Ascending aorta (tissue), 2 donors: ENCODE measurements at regions of chr1 and their contacts with region 1.

Region 1: GRCh38 chr1:67430352-67431155 is at the start of gene SERBP1:
- DNase-seq: peak; percentile 88 to 98
- H3K4me3 ChIP-seq: peak within 1 kb of the TSS; percentile 83 to 88
- H3K27ac ChIP-seq: peak within 1 kb of the TSS; percentile 94 to 98
- H3K4me1 ChIP-seq: peaks cover 0 to 31% of the 10 kb centered on the region in 2 donors
- H3K27me3 ChIP-seq: no peaks in the 10 kb centered on the region
- CTCF ChIP-seq: no peak
- total RNA-seq, gene SERBP1: 125 TPM

Region 2: GRCh38 chr1:66924756-66925557 is 505.6 kb before region 1 on chr1 and contains the starts of genes DNAI4 and MIER1:
- intact Hi-C with region 1: loop called (anchors 10 kb)
- DNase-seq: peak; percentile 95 to 99
- H3K4me3 ChIP-seq: peak within 1 kb of the TSS; percentile 71 to 74
- H3K27ac ChIP-seq: peak within 1 kb of the TSS; percentile 85 to 95
- H3K4me1 ChIP-seq: peaks cover 10% of the 10 kb centered on the region in 2 donors
- H3K27me3 ChIP-seq: no peaks in the 10 kb centered on the region
- CTCF ChIP-seq: peak in 1 of 3 experiments; percentile 17
- total RNA-seq, gene DNAI4: not detected
- total RNA-seq, gene MIER1: 18.4 TPM

Region 3: DNA sequence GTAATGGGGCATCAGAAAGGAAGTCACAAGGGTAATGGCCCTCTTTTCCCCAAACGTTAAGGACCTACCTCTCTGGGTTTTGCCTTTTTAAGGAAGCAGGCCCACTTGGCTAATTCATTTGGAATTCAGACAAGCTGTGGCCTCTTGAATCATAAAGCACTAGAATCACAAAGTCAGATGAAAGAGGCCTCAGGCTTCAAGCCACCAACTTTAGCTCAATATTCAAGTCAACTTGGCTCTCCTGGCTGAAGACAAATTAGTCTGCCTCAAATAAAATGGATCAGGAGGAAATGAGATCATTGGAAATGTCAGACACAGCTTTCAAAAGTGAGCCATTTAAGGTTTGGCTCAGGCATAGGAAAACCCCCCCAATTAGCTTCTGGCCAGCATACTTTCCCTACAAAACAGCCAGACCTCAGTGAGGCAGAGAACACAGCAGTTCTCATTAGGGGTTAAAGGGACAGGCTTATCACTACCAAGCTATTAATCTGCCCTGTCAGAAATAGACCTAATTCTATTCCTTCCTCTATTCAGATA is 410.9 kb before region 1 on chr1:
- intact Hi-C with region 1: loop called (anchors 10 kb)
- DNase-seq: peak in 1 of 2 donors; percentile 77
- H3K4me3 ChIP-seq: no peak overlapping the region
- H3K27ac ChIP-seq: peak overlapping the region; percentile 87 to 90
- H3K4me1 ChIP-seq: peaks cover 0 to 33% of the 10 kb centered on the region in 2 donors
- H3K27me3 ChIP-seq: no peaks in the 10 kb centered on the region
- CTCF ChIP-seq: no peak

Region 4: DNA sequence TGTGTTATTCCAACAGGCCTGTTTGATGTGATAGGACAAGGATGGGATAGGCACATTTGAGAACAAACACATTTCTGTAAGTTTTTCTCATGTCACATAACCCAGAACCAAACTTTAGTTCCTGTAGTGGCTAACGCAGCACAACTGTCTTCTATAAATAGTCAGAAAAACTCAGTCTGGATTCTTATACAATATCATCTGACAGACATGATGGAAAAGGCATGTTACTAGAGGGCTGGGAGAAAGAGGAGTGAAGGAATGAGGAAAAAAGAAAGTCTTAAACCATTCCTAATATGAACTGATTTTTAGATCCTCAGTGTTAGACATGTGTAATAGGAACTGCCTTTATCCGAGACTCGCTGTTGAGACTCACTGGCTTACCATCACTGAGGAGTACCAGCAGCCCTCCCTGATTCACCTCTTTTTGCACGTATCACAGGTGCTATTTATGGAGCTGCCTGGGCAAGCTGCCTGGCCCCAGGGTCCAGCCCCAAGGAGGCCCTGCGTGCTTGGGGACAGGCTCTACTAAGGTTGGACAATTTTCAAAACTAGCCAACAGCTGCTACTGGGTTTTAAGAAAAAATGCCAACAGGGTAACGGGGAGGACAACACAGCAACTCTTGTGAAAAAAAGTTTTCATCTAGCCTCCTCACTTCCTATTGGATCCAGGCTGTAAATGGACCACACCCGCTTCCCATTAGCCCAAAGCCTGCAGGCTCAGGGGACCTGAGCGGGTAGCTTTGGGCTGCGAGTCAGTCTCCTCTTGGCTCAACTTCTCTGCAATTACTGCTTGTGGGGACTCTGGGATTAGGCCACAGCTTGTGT is 30.3 kb after region 1 on chr1:
- intact Hi-C with region 1: loop called (anchors 2 kb)
- DNase-seq: peak in 1 of 2 donors; percentile 68
- H3K4me3 ChIP-seq: peak overlapping the region in 1 of 2 donors; percentile 21
- H3K27ac ChIP-seq: peak overlapping the region; percentile 50 to 63
- H3K4me1 ChIP-seq: peaks cover 3 to 9% of the 10 kb centered on the region in 2 donors
- H3K27me3 ChIP-seq: no peaks in the 10 kb centered on the region
- CTCF ChIP-seq: no peak

Region 5: DNA sequence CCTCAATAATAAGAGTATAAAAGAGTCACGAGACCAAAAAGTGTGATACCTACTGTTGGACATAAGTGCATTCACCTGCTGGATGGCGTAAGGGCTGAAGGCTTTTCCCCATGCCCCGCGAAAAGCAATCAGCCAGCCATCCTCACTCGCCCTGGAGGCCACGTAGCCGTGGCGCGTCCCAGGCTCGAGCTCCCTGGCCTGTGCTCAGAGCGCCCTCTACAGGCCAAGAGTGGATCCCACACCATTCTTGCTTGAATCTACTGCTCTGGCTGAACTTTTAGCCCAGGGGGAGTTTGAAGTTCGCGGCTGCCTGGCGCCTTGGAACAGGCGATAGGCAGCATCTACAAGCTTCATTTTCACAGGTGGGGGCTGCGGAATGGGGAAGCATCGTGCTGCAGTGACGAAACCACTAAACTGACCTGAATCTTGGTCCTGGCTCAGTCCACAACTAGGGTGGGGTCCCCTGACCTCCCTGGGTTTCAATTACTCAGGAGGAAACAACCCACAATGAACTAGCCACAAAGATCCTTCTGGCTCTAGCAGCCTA is 69.9 kb after region 1 on chr1:
- intact Hi-C with region 1: loop called (anchors 2 kb)
- DNase-seq: peak; percentile 31 to 91
- H3K4me3 ChIP-seq: no peak overlapping the region
- H3K27ac ChIP-seq: no peak overlapping the region
- H3K4me1 ChIP-seq: no peaks in the 10 kb centered on the region
- H3K27me3 ChIP-seq: no peaks in the 10 kb centered on the region
- CTCF ChIP-seq: peak; percentile 93 to 98 (median 96)

Region 6: DNA sequence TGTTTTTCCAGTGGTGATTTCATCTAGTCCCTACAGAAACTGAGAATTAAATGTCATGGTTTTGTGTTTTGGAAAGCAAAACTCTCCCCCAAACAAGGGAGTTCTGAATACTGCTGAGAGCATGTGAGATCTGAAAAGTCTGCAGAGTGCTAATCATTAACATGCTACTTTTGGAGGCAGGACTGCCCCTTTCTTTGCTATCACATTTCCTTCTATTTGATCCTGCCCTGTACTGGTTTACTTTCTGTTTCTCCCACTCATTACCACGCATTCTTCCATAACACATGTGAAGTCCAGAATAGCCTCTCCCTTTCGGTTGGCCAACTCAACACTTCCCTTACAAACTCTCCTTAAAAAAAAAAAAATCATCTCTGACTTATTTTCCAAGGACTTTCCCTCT is 318.1 kb after region 1 on chr1:
- intact Hi-C with region 1: loop called (anchors 10 kb)
- DNase-seq: no peak
- H3K4me3 ChIP-seq: peak overlapping the region; percentile 18 to 37
- H3K27ac ChIP-seq: peak overlapping the region; percentile 89 to 94
- H3K4me1 ChIP-seq: peaks cover 16 to 87% of the 10 kb centered on the region in 2 donors
- H3K27me3 ChIP-seq: no peaks in the 10 kb centered on the region
- CTCF ChIP-seq: no peak

Region 7: DNA sequence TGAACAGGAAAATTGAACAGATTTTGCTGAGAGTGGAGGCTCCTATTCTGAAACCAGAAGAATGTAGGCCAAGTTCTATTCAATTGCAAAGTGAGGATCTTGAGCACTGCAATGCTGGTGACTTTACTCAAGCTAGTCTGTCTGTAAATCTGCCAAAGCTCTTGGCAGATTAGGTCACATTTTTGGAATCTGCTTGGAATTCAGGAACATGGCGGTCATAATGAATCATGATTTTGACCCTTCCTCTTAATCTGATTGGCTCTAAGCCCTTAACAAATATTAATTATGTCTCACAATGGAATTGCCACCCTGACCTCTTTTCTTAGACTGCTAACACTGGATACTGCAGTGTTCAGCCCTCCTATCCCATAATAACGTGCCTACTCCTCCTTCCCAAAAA is 409.9 kb after region 1 on chr1:
- intact Hi-C with region 1: loop called (anchors 5 kb)
- DNase-seq: no peak
- H3K4me3 ChIP-seq: no peak overlapping the region
- H3K27ac ChIP-seq: peak overlapping the region; percentile 80 to 93
- H3K4me1 ChIP-seq: peaks cover 6 to 43% of the 10 kb centered on the region in 2 donors
- H3K27me3 ChIP-seq: no peaks in the 10 kb centered on the region
- CTCF ChIP-seq: no peak